Activated T-helper 2 cell treated with anti-CD3 and anti-CD28 coated beads, Interferon-gamma antibody, Interleukin-2, Interleukin-4, amounts not matched to agents 10 μg/mL and 5 μg/mL and 100 μg/mL, durations not matched to agents 14 hours and 24 hours and 36 hours (primary cell): ENCODE measurements at regions of chr15 and their contacts with region 1.

Region 1: GRCh38 chr15:90869601-90870353 is 1.4 kb downstream of the FURIN start:
- DNase-seq: peak; percentile 31
- H3K4me3 Mint-ChIP-seq: peak overlapping the region; percentile 96
- H3K27ac Mint-ChIP-seq: peak overlapping the region; percentile 91
- H3K4me1 Mint-ChIP-seq: peaks cover 51% of the 10 kb centered on the region
- H3K27me3 Mint-ChIP-seq: no peaks in the 10 kb centered on the region

Region 2: GRCh38 chr15:90154861-90155626 is 714.7 kb before region 1 on chr15:
- intact Hi-C with region 1: no loop called
- DNase-seq: no peak
- H3K4me3 Mint-ChIP-seq: no peak overlapping the region
- H3K27ac Mint-ChIP-seq: no peak overlapping the region
- H3K4me1 Mint-ChIP-seq: peaks cover 22% of the 10 kb centered on the region
- H3K27me3 Mint-ChIP-seq: no peaks in the 10 kb centered on the region

Region 3: GRCh38 chr15:90829942-90830440 is 39.8 kb before region 1 on chr15:
- intact Hi-C with region 1: loop called (anchors 1 kb)
- DNase-seq: peak; percentile 57
- H3K4me3 Mint-ChIP-seq: peak overlapping the region; percentile 31
- H3K27ac Mint-ChIP-seq: peak overlapping the region; percentile 96
- H3K4me1 Mint-ChIP-seq: peaks cover 39% of the 10 kb centered on the region
- H3K27me3 Mint-ChIP-seq: no peaks in the 10 kb centered on the region

Region 4: GRCh38 chr15:90838141-90838540 is 31.6 kb before region 1 on chr15:
- intact Hi-C with region 1: loop called (anchors 1 kb)
- DNase-seq: peak; percentile 79
- H3K4me3 Mint-ChIP-seq: peak overlapping the region; percentile 70
- H3K27ac Mint-ChIP-seq: peak overlapping the region; percentile 96
- H3K4me1 Mint-ChIP-seq: peaks cover 54% of the 10 kb centered on the region
- H3K27me3 Mint-ChIP-seq: no peaks in the 10 kb centered on the region

Region 5: DNA sequence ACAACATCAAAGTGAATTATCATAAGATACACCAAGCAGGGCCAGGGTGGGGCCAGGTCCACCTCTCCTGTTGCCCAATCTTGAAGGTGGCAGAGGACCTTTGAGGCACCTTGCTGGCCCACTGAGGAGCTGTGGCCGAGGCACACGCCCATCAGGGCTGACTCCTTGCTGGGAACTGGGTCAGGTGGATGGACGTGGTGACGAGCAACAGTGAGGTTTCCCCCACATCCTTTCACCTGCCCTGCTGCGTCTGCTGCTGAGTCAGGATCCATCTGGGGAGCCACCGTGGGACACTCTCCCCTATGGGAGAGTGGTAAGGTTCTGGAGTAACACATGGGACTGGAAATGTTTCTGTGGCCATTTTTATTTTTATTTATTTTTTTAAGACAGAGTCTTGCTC is 18.7 kb before region 1 on chr15:
- intact Hi-C with region 1: loop called (anchors 1 kb)
- DNase-seq: no peak
- H3K4me3 Mint-ChIP-seq: peak overlapping the region; percentile 60
- H3K27ac Mint-ChIP-seq: peak overlapping the region; percentile 94
- H3K4me1 Mint-ChIP-seq: peaks cover 53% of the 10 kb centered on the region
- H3K27me3 Mint-ChIP-seq: no peaks in the 10 kb centered on the region

Region 6: GRCh38 chr15:90886041-90886614 is 16.4 kb after region 1 on chr15:
- intact Hi-C with region 1: loop called (anchors 1 kb)
- DNase-seq: peak; percentile 72
- H3K4me3 Mint-ChIP-seq: no peak overlapping the region
- H3K27ac Mint-ChIP-seq: peak overlapping the region; percentile 66
- H3K4me1 Mint-ChIP-seq: peaks cover 30% of the 10 kb centered on the region
- H3K27me3 Mint-ChIP-seq: no peaks in the 10 kb centered on the region